WTC11 (cell line): ENCODE measurements at regions of chr4 and their contacts with region 1.

Region 1: DNA sequence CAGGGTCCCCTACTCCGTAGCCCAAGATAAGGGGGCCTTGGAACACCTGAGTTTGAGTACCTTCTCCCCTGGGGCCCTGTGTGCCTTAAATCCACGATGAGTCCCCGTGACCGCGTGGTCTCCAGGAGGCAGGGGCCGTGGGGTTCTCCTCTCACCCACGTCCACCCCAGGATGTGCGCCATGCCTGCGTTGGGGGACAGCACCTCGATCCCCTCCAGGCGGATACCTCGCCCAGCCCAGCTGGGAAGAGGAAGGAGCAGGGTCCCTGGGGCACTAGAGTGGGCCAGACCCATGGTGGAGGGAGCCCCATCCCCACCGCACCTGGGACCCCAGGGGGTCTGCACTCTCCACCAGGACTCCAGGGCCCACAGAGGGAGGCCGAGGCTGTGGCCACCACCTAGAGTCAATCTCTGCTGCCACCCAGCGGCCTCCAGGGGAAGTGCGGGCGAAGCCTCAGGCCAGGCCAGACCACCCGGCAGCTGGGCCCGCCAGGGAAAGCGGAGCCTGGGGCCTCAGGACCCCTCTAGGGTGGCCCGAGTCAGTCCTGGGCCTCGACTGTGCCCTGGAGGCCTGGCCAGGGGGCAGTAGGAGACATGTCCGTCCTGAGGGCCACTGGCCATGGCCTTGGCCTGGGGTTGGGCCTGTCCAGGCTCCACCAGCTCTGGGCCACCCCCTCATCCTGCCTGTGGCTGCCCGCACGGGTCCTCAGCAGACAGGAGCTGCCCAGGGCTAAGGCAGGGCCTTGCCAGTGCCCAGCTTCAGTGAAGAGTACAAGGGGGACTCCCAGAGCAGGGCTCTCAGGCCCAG is 55.0 kb downstream of the FAM53A start:
- DNase-seq: peak; percentile 87
- ATAC-seq: peak; percentile 93
- H3K4me3 Mint-ChIP-seq: no peak overlapping the region
- H3K27ac Mint-ChIP-seq: no peak overlapping the region
- H3K4me1 Mint-ChIP-seq: no peaks in the 10 kb centered on the region
- H3K27me3 Mint-ChIP-seq: no peaks in the 10 kb centered on the region
- CTCF ChIP-seq: peak; percentile 96

Region 2: GRCh38 chr4:1356181-1356998 is 272.7 kb before region 1 on chr4:
- CTCF ChIA-PET with region 1: interaction called, 16 read pairs
- POLR2A ChIA-PET with region 1: no interaction called
- DNase-seq: peak; percentile 84
- ATAC-seq: peak; percentile 29
- H3K4me3 Mint-ChIP-seq: no peak overlapping the region
- H3K27ac Mint-ChIP-seq: no peak overlapping the region
- H3K4me1 Mint-ChIP-seq: peaks cover 3% of the 10 kb centered on the region
- H3K27me3 Mint-ChIP-seq: no peaks in the 10 kb centered on the region
- CTCF ChIP-seq: peak; percentile 78

Region 3: GRCh38 chr4:1606321-1606989 is 22.6 kb before region 1 on chr4:
- CTCF ChIA-PET with region 1: interaction called, 12 read pairs
- POLR2A ChIA-PET with region 1: no interaction called
- DNase-seq: peak; percentile 62
- ATAC-seq: peak; percentile 31; the same call in 1 of the 2 replicates
- H3K4me3 Mint-ChIP-seq: no peak overlapping the region
- H3K27ac Mint-ChIP-seq: no peak overlapping the region
- H3K4me1 Mint-ChIP-seq: no peaks in the 10 kb centered on the region
- H3K27me3 Mint-ChIP-seq: no peaks in the 10 kb centered on the region
- CTCF ChIP-seq: peak; percentile 48

Region 4: GRCh38 chr4:1819284-1819683 is 190.2 kb after region 1 on chr4:
- CTCF ChIA-PET with region 1: no interaction called
- POLR2A ChIA-PET with region 1: no interaction called
- DNase-seq: no peak
- ATAC-seq: no peak
- H3K4me3 Mint-ChIP-seq: no peak overlapping the region
- H3K27ac Mint-ChIP-seq: no peak overlapping the region
- H3K4me1 Mint-ChIP-seq: no peaks in the 10 kb centered on the region
- H3K27me3 Mint-ChIP-seq: no peaks in the 10 kb centered on the region
- CTCF ChIP-seq: no peak